ENCODE measurements at regions of chr11 and their contacts with region 1.

Region 1: DNA sequence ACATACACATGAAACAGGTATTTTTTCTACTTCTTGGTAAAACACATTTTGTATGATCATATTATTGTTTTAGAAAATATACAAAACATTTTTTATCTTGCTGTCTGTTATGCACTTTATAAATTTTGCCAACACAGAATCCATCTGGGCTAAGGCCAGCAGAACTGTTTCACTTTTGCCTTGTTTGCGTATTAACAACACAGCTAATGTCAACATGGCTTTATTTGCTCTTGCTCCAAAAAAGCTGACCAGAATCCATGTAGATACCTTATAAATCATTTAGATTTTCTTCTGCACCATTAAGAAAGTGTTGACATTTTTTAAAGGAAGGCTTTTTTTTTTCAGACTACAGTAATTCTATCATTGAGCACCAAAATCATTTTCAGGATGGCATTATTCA is 58.1 kb upstream of the PGR start:
- DNase-seq: no peak
- ATAC-seq: no peak
- H3K4me3 ChIP-seq: no peak overlapping the region
- H3K27ac ChIP-seq: no peak overlapping the region
- H3K4me1 ChIP-seq: no peaks in the 10 kb centered on the region
- H3K27me3 ChIP-seq: no peaks in the 10 kb centered on the region
- CTCF ChIP-seq: no peak
- POLR2A ChIP-seq: no peak

Region 2: GRCh38 chr11:101127699-101128570 is 59.8 kb before region 1 on chr11:
- in situ Hi-C with region 1: no loop called
- intact Hi-C with region 1: loop called (anchors 5 kb)
- DNase-seq: no peak
- ATAC-seq: peak; percentile 23 to 52
- H3K4me3 ChIP-seq: peak overlapping the region; percentile 47 to 59 (median 58)
- H3K27ac ChIP-seq: peak overlapping the region; percentile 12 to 58 (median 44)
- H3K4me1 ChIP-seq: no peaks in the 10 kb centered on the region
- H3K27me3 ChIP-seq: peaks cover 32 to 46% (median 35%) of the 10 kb centered on the region in 3 donors
- CTCF ChIP-seq: no peak
- POLR2A ChIP-seq: no peak

Region 3: GRCh38 chr11:101254037-101254436 is 66.3 kb after region 1 on chr11:
- in situ Hi-C with region 1: no loop called
- intact Hi-C with region 1: no loop called
- DNase-seq: no peak
- ATAC-seq: no peak
- H3K4me3 ChIP-seq: no peak overlapping the region
- H3K27ac ChIP-seq: no peak overlapping the region
- H3K4me1 ChIP-seq: no peaks in the 10 kb centered on the region
- H3K27me3 ChIP-seq: no peaks in the 10 kb centered on the region
- CTCF ChIP-seq: no peak
- POLR2A ChIP-seq: no peak